Activated CD8-positive, alpha-beta memory T cell treated with anti-CD3 and anti-CD28 coated beads, Interleukin-2, amount 10 ng/mL, durations not matched to agents 7 days and 5 days (primary cell): ENCODE measurements at regions of chr6 and their contacts with region 1.

Region 1: GRCh38 chr6:41787219-41787917 is at the start of gene TOMM6:
- DNase-seq: peak; percentile 97
- ATAC-seq: peak; percentile 87
- H3K4me3 Mint-ChIP-seq: peak within 1 kb of the TSS; percentile 97
- H3K27ac Mint-ChIP-seq: peak within 1 kb of the TSS; percentile 97
- H3K4me1 Mint-ChIP-seq: peaks cover 22% of the 10 kb centered on the region
- H3K27me3 Mint-ChIP-seq: peaks cover 9% of the 10 kb centered on the region
- total RNA-seq, gene TOMM6: 161 to 219 TPM

Region 2: GRCh38 chr6:41558033-41558807 is 229.1 kb before region 1 on chr6:
- CTCF ChIA-PET with region 1: no interaction called
- DNase-seq: no peak
- ATAC-seq: no peak
- H3K4me3 Mint-ChIP-seq: no peak overlapping the region
- H3K27ac Mint-ChIP-seq: no peak overlapping the region
- H3K4me1 Mint-ChIP-seq: peaks cover 26% of the 10 kb centered on the region
- H3K27me3 Mint-ChIP-seq: peaks cover 54% of the 10 kb centered on the region

Region 3: GRCh38 chr6:41625442-41625841 is 161.9 kb before region 1 on chr6:
- CTCF ChIA-PET with region 1: no interaction called
- DNase-seq: no peak
- ATAC-seq: no peak
- H3K4me3 Mint-ChIP-seq: no peak overlapping the region
- H3K27ac Mint-ChIP-seq: no peak overlapping the region
- H3K4me1 Mint-ChIP-seq: peaks cover 6% of the 10 kb centered on the region
- H3K27me3 Mint-ChIP-seq: peaks cover 36% of the 10 kb centered on the region

Region 4: GRCh38 chr6:41735427-41736356 is 51.7 kb before region 1 on chr6 and contains the start of gene TFEB:
- CTCF ChIA-PET with region 1: interaction called, 33 read pairs
- DNase-seq: peak; percentile 95
- ATAC-seq: peak; percentile 71
- H3K4me3 Mint-ChIP-seq: peak within 1 kb of the TSS; percentile 79
- H3K27ac Mint-ChIP-seq: peak within 1 kb of the TSS; percentile 67
- H3K4me1 Mint-ChIP-seq: peaks cover 31% of the 10 kb centered on the region
- H3K27me3 Mint-ChIP-seq: no peaks in the 10 kb centered on the region
- total RNA-seq, gene TFEB: 14.5 to 15.8 TPM

Region 5: DNA sequence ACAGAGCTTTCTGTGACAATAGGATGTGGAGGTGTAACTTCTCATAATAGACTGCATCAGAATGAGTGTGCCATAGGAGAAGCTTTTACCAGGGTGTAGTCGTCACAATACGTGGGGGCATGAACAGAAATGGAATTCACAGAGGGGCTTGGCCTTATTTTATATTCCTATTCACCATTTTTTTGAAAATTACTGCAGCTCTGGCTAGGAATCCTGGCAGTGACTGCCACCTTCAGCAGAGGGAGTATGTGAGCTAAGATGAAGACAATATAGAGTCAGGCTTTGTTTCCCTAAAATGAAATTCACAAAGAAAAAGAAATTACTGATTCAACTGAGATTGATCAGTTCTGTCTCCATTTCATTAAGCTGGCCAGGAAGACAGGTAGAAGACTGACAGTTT is 14.0 kb after region 1 on chr6:
- CTCF ChIA-PET with region 1: interaction called, 31 read pairs
- DNase-seq: no peak
- ATAC-seq: peak; percentile 23
- H3K4me3 Mint-ChIP-seq: no peak overlapping the region
- H3K27ac Mint-ChIP-seq: no peak overlapping the region
- H3K4me1 Mint-ChIP-seq: peaks cover 10% of the 10 kb centered on the region
- H3K27me3 Mint-ChIP-seq: no peaks in the 10 kb centered on the region

Region 6: DNA sequence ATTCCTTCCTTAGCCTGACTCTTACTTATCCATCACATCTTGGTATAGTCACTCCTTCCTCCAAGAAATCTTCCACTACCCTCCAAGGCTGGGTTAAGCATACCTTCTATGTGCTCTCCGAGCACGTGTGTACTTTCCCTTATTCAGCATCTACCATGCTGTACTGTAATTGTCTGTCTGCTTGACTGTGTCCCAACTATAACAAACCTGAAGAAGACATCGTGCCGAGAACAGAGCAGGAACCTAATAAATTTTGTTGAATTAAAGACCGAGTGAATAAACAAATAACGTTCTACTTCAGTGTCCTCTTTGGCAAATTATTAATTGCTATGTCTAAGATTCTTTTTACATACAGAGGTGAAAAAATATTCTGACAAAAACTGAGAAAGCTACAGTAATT is 72.0 kb after region 1 on chr6:
- CTCF ChIA-PET with region 1: no interaction called
- DNase-seq: no peak
- ATAC-seq: no peak
- H3K4me3 Mint-ChIP-seq: no peak overlapping the region
- H3K27ac Mint-ChIP-seq: no peak overlapping the region
- H3K4me1 Mint-ChIP-seq: no peaks in the 10 kb centered on the region
- H3K27me3 Mint-ChIP-seq: no peaks in the 10 kb centered on the region

Region 7: GRCh38 chr6:41920921-41921711 is 133.7 kb after region 1 on chr6 and contains the starts of genes BYSL and MED20:
- CTCF ChIA-PET with region 1: interaction called, 49 read pairs
- DNase-seq: peak; percentile 96
- ATAC-seq: peak; percentile 91
- H3K4me3 Mint-ChIP-seq: peak within 1 kb of the TSS; percentile 88
- H3K27ac Mint-ChIP-seq: peak within 1 kb of the TSS; percentile 98
- H3K4me1 Mint-ChIP-seq: peaks cover 57% of the 10 kb centered on the region
- H3K27me3 Mint-ChIP-seq: no peaks in the 10 kb centered on the region
- total RNA-seq, gene BYSL: 33.1 to 48.5 TPM
- total RNA-seq, gene MED20: 21.9 to 25.6 TPM

Region 8: GRCh38 chr6:42050266-42051032 is 263.1 kb after region 1 on chr6 and contains the start of gene TAF8:
- CTCF ChIA-PET with region 1: interaction called, 340 read pairs
- DNase-seq: peak; percentile 96
- ATAC-seq: peak; percentile 82
- H3K4me3 Mint-ChIP-seq: peak within 1 kb of the TSS; percentile 94
- H3K27ac Mint-ChIP-seq: peak within 1 kb of the TSS; percentile 98
- H3K4me1 Mint-ChIP-seq: peaks cover 68% of the 10 kb centered on the region
- H3K27me3 Mint-ChIP-seq: no peaks in the 10 kb centered on the region
- total RNA-seq, gene TAF8: 50.9 to 53.2 TPM